ENCODE measurements at regions of chrX and their contacts with region 1.

Region 1: DNA sequence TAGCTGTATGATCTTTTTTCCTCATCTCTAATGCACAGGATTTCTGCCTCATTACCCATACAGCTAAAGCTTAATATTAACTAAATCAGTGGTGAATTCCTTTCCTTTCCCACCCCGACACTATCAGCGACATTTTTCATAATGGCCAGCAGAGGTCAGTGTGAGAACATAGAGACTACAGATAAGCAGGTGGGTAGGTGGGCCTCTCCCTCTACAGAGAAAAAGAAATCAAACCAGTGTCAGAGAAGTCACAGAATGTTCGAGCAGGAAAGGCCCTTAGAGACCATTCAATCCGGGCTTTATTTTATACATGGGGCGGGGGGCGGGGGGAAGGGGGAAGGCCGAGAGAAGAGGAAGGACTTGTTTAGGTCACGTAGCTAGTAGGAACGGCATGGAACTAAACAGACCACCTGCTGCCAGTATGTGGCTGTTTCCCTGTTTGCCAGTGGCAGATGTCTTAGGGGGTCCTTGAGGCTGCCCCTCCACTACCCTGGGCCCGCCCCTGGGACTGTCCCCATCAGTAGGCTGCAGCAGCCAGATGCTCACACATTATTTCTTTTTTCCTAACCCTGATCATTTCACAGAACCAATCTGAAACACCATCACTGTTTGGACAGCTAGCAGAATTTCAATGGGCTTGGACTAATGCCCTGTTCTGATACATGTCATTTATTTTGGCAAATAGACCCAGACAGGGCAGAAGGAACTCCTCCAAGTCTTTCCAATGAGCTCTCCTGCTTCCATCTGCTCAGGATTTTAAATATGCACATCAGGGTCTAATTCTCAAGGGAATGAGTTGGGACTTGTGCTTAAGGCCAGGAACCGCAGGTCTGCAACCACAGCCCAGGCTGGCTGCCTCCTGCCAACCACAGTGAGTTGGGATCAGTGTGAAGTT is 133.4 kb downstream of the ATG4A start:
- DNase-seq: peak; percentile 30 to 38
- ATAC-seq: peak; percentile 62 to 77; a peak in 3 of 6 replicates
- H3K4me3 ChIP-seq: no peak overlapping the region
- H3K27ac ChIP-seq: peak overlapping the region; percentile 39 to 62
- H3K4me1 ChIP-seq: peaks cover 9% of the 10 kb centered on the region; the same call in 2 of the 3 replicates
- CTCF ChIP-seq: peak; percentile 70
- EP300 ChIP-seq: no peak
- POLR2A ChIP-seq: no peak
- RAD21 ChIP-seq: peak; percentile 82 to 84

Region 2: DNA sequence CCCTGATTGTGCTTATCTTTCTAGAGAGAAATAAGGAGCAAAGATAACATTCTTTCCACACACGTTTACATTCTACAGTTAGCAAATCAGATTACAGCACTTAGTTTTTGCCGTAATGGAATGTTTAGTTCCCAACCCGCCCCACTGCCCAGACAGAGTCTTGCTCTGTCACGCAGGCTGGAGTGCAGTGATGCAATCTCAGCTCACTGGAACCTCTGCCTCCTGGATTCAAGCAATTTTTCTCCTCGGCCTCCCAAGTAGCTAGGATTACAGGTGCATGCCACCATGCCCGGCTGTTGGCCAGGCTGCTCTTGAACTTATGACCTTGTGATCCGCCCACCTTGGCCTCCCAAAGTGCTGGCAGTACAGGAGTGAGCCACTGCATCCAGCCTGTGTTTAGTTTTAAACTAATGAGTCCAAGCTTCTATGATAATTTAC is 605.1 kb before region 1 on chrX:
- CTCF ChIA-PET with region 1: no interaction called
- POLR2A ChIA-PET with region 1: no interaction called
- DNase-seq: no peak
- ATAC-seq: no peak
- H3K4me3 ChIP-seq: no peak overlapping the region
- H3K27ac ChIP-seq: no peak overlapping the region
- H3K4me1 ChIP-seq: no peaks in the 10 kb centered on the region
- CTCF ChIP-seq: no peak
- EP300 ChIP-seq: no peak
- POLR2A ChIP-seq: no peak
- RAD21 ChIP-seq: no peak

Region 3: GRCh38 chrX:108081110-108081509 is 143.9 kb before region 1 on chrX:
- CTCF ChIA-PET with region 1: no interaction called
- POLR2A ChIA-PET with region 1: no interaction called
- DNase-seq: no peak
- ATAC-seq: no peak
- H3K4me3 ChIP-seq: no peak overlapping the region
- H3K27ac ChIP-seq: no peak overlapping the region
- H3K4me1 ChIP-seq: no peaks in the 10 kb centered on the region
- CTCF ChIP-seq: no peak
- EP300 ChIP-seq: no peak
- POLR2A ChIP-seq: no peak
- RAD21 ChIP-seq: no peak

Region 4: DNA sequence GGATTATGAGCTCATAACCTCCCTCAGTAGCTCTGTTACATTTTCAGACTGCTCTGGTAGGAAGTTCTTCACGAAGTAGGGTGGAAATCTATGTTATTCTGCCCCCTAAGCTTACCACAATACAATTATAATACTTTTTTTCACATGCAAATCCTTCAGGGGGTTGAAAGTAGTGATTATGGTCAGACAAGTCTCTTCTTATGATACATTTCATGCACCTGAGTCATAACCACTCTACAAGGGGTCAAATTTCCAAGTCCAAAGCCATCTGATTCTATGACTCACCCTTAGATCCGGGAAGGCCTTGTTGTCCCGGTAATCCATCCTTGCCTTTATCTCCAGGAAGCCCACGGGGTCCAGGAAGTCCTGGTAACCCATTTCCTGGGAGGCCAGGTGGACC is 38.2 kb before region 1 on chrX:
- CTCF ChIA-PET with region 1: no interaction called
- POLR2A ChIA-PET with region 1: no interaction called
- DNase-seq: peak; percentile 19 to 48
- ATAC-seq: peak; percentile 53 to 66; a peak in 4 of 6 replicates
- H3K4me3 ChIP-seq: no peak overlapping the region
- H3K27ac ChIP-seq: no peak overlapping the region
- H3K4me1 ChIP-seq: peaks cover 7% of the 10 kb centered on the region
- CTCF ChIP-seq: no peak
- EP300 ChIP-seq: no peak
- POLR2A ChIP-seq: no peak
- RAD21 ChIP-seq: no peak

Region 5: DNA sequence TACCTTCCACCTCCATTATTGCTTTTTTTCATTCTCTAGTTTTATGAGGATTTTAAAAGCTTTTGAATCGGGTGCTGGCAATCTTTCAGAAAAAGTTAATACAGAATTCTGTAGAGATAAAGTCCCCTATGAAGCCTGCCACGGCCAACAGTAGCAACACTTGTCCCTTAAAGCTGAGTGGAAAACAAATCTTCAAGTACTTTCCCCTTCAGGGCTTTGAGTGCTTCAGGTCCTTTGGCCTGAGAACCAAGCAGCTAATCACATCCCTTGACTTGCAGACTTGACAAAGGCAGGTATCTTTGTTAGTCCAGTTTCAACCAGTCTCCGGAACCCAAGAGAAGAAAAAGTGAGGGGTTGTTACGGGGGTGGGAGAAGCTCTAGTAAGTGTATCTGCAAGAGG is 11.0 kb after region 1 on chrX:
- CTCF ChIA-PET with region 1: interaction called, 22 read pairs
- POLR2A ChIA-PET with region 1: no interaction called
- DNase-seq: no peak
- ATAC-seq: no peak
- H3K4me3 ChIP-seq: no peak overlapping the region
- H3K27ac ChIP-seq: no peak overlapping the region
- H3K4me1 ChIP-seq: no peaks in the 10 kb centered on the region
- CTCF ChIP-seq: no peak
- EP300 ChIP-seq: no peak
- POLR2A ChIP-seq: no peak
- RAD21 ChIP-seq: no peak

Region 6: GRCh38 chrX:108250654-108251579 is 25.9 kb after region 1 on chrX:
- CTCF ChIA-PET with region 1: interaction called, 12 read pairs
- POLR2A ChIA-PET with region 1: no interaction called
- DNase-seq: no peak
- ATAC-seq: no peak
- H3K4me3 ChIP-seq: no peak overlapping the region
- H3K27ac ChIP-seq: no peak overlapping the region
- H3K4me1 ChIP-seq: no peaks in the 10 kb centered on the region
- CTCF ChIP-seq: no peak
- EP300 ChIP-seq: no peak
- POLR2A ChIP-seq: no peak
- RAD21 ChIP-seq: no peak

Region 7: GRCh38 chrX:108307408-108308085 is 82.6 kb after region 1 on chrX:
- CTCF ChIA-PET with region 1: interaction called, 28 read pairs
- POLR2A ChIA-PET with region 1: no interaction called
- DNase-seq: peak in 1 of 2 experiments; percentile 70
- ATAC-seq: peak in 1 of 2 experiments; percentile 75; a peak in 4 of 6 replicates
- H3K4me3 ChIP-seq: no peak overlapping the region
- H3K27ac ChIP-seq: peak overlapping the region; percentile 84 to 90
- H3K4me1 ChIP-seq: peaks cover 69% of the 10 kb centered on the region
- CTCF ChIP-seq: no peak
- EP300 ChIP-seq: no peak
- POLR2A ChIP-seq: no peak
- RAD21 ChIP-seq: 0 out of 5 replicates have a peak, but pooled peaks of 1 of the 2 experiments have one; percentile 17

Region 8: GRCh38 chrX:108384783-108385182 is 159.8 kb after region 1 on chrX:
- CTCF ChIA-PET with region 1: no interaction called
- POLR2A ChIA-PET with region 1: no interaction called
- DNase-seq: no peak
- ATAC-seq: no peak
- H3K4me3 ChIP-seq: no peak overlapping the region
- H3K27ac ChIP-seq: no peak overlapping the region
- H3K4me1 ChIP-seq: no peaks in the 10 kb centered on the region
- CTCF ChIP-seq: no peak
- EP300 ChIP-seq: no peak
- POLR2A ChIP-seq: no peak
- RAD21 ChIP-seq: no peak

Region 9: DNA sequence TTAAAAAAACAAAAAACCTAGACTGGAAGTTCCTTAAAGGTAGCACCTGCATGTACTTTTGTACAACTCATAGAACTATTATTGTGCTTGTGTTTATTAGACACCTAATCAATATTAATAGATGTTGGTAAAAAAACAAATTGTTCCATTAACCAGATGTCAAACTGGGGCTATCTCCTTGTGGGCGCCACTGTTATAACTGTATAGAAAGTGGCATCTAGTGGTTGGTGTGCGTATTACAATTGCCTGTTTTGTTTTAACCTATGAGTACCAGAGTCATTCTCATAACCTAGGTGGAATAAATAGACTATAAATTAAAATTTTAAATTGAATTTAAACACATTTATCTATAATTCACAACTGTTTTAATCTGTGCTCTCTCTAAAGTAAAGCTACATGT is 312.0 kb after region 1 on chrX:
- CTCF ChIA-PET with region 1: interaction called, 41 read pairs
- POLR2A ChIA-PET with region 1: no interaction called
- DNase-seq: peak; percentile 9 to 47
- ATAC-seq: peak in 1 of 2 experiments; percentile 78; a peak in 2 of 6 replicates
- H3K4me3 ChIP-seq: no peak overlapping the region
- H3K27ac ChIP-seq: no peak overlapping the region
- H3K4me1 ChIP-seq: peaks cover 4% of the 10 kb centered on the region; the same call in 1 of the 3 replicates
- CTCF ChIP-seq: peak; percentile 67
- EP300 ChIP-seq: no peak
- POLR2A ChIP-seq: no peak
- RAD21 ChIP-seq: peak; percentile 77

Measured in A549 (cell line).